Activated CD4-positive, alpha-beta memory T cell treated with anti-CD3 and anti-CD28 coated beads, Interleukin-2, amount 10 ng/mL, durations not matched to agents 7 days and 5 days (primary cell): ENCODE measurements at regions of chr11 and their contacts with region 1.

Region 1: GRCh38 chr11:47454180-47454644 is 5.3 kb upstream of the RAPSN start:
- DNase-seq: peak; percentile 76
- H3K4me3 Mint-ChIP-seq: no peak overlapping the region
- H3K27ac Mint-ChIP-seq: no peak overlapping the region
- H3K4me1 Mint-ChIP-seq: peaks cover 5% of the 10 kb centered on the region
- H3K27me3 Mint-ChIP-seq: no peaks in the 10 kb centered on the region

Region 2: GRCh38 chr11:47464483-47464882 is 10.3 kb after region 1 on chr11:
- CTCF ChIA-PET with region 1: interaction called, 14 read pairs
- POLR2A ChIA-PET with region 1: no interaction called
- DNase-seq: no peak
- H3K4me3 Mint-ChIP-seq: no peak overlapping the region
- H3K27ac Mint-ChIP-seq: no peak overlapping the region
- H3K4me1 Mint-ChIP-seq: peaks cover 5% of the 10 kb centered on the region
- H3K27me3 Mint-ChIP-seq: no peaks in the 10 kb centered on the region

Region 3: GRCh38 chr11:47499614-47500013 is 45.4 kb after region 1 on chr11:
- CTCF ChIA-PET with region 1: no interaction called
- POLR2A ChIA-PET with region 1: no interaction called
- DNase-seq: no peak
- H3K4me3 Mint-ChIP-seq: no peak overlapping the region
- H3K27ac Mint-ChIP-seq: peak overlapping the region; percentile 1
- H3K4me1 Mint-ChIP-seq: peaks cover 31% of the 10 kb centered on the region
- H3K27me3 Mint-ChIP-seq: no peaks in the 10 kb centered on the region